ENCODE measurements at regions of chr1 and their contacts with region 1.

Region 1: DNA sequence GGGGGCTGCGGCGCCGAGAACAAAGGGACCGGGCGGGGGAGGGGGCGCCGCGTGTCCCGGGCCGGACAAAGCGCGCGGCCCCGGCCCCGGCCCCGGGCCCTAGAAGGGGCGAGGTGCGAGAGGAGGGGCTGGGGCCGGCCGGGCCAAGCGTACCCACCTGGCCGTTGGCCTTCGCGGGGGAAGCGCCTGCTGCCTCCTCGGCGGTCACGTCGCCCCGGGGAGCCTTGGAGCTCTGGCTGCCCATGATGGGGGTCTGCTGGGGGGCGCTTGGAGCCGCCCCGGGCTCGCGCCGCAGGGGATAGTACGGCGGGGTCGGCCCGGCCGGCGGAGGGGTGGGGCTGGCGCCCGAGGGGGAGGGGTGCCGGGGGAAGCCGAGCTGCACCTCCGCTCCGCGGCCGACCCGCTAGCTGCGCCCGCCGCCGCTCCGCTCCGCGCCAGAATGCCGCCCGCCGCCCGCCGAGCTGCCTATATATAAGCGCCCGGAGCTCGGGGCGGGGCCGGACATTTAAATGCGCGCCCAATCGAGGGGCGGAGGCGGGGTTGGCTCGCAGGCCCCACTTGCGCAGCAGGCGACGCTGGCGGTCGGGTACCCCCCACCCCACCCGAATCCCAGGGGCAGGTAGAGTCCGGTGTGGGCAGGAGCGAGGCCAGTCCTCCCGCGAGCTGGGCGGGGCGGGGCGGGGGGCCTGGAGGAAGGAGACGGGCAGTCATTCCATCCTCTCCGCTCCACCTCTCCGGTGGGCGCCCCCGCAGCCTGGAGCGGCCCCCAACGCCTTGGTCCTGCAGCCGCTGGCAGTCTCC is at the start of gene MARCKSL1:
- DNase-seq: peak; percentile 94
- ATAC-seq: peak; percentile 61
- H3K4me3 ChIP-seq: peak within 1 kb of the TSS; percentile 5 to 78 (median 70)
- H3K4me3 Mint-ChIP-seq: peak within 1 kb of the TSS; percentile 93
- H3K27ac ChIP-seq: peak within 1 kb of the TSS; percentile 49 to 61
- H3K27ac Mint-ChIP-seq: peak within 1 kb of the TSS; percentile 92
- H3K4me1 ChIP-seq: peaks cover 57 to 61% of the 10 kb centered on the region in 2 donors
- H3K4me1 Mint-ChIP-seq: peaks cover 60% of the 10 kb centered on the region
- H3K27me3 ChIP-seq: no peaks in the 10 kb centered on the region
- H3K27me3 Mint-ChIP-seq: no peaks in the 10 kb centered on the region
- CTCF ChIP-seq: no peak
- total RNA-seq, gene MARCKSL1: 73.2 and 77.6 TPM in 2 replicates

Region 2: DNA sequence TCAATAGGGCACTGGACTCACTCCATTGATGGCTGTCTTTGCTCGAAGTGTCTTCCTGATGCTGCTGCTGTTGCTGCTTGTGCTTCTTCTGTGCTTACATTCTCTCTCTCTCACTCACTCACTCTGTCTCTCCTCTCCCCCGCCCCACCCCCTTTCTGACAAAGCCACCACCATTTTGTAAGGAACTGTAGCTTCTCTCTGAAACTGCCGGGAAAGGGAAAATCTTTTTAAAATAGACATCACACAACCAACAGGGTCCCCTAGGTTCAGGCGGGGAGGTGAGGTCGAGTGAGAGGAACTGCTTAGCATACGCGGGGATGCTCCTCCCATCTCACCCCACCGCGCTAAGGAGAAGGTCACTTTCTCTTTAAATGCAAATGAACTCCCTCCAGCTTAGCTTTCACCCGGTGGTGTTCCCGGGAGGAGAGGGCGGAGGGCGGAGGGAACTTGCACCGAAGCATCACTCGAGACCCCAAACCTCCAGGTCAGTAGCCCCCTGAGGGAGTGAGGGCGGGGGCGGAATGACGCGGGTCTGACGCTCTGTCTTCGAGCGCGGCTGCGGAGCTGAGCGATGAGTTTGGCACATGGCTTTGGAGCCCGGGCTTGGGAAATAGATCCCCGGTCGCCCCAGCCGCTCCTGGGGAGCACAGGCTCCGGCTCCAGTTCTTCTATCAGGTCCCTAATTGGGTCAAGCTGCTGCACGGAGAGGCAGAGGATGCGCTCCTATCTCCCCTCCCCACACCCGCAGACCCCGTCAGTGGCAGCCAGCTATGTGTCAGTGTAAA is 135.6 kb before region 1 on chr1 and contains the start of gene CCDC28B:
- CTCF ChIA-PET with region 1: interaction called, 5 read pairs
- POLR2A ChIA-PET with region 1: interaction called, 6 read pairs
- intact Hi-C with region 1: loop called (anchors 2 kb)
- DNase-seq: peak; percentile 77
- ATAC-seq: peak; percentile 58
- H3K4me3 ChIP-seq: peak within 1 kb of the TSS; percentile 48 to 85 (median 79)
- H3K4me3 Mint-ChIP-seq: peak within 1 kb of the TSS; percentile 88
- H3K27ac ChIP-seq: peak within 1 kb of the TSS; percentile 78 to 88
- H3K27ac Mint-ChIP-seq: peak within 1 kb of the TSS; percentile 86
- H3K4me1 ChIP-seq: peaks cover 17 to 36% of the 10 kb centered on the region in 2 donors
- H3K4me1 Mint-ChIP-seq: peaks cover 33% of the 10 kb centered on the region
- H3K27me3 ChIP-seq: no peaks in the 10 kb centered on the region
- H3K27me3 Mint-ChIP-seq: no peaks in the 10 kb centered on the region
- CTCF ChIP-seq: no peak
- total RNA-seq, gene CCDC28B: 7.8 and 10.2 TPM in 2 replicates

Region 3: GRCh38 chr1:32240140-32240951 is 95.6 kb before region 1 on chr1:
- CTCF ChIA-PET with region 1: interaction called, 71 read pairs
- POLR2A ChIA-PET with region 1: interaction called, 53 read pairs
- intact Hi-C with region 1: loop called (anchors 2 kb)
- DNase-seq: peak; percentile 75
- ATAC-seq: peak; percentile 79
- H3K4me3 ChIP-seq: peak overlapping the region; percentile 50 to 77 (median 69)
- H3K4me3 Mint-ChIP-seq: peak overlapping the region; percentile 95
- H3K27ac ChIP-seq: peak overlapping the region; percentile 4 to 61
- H3K27ac Mint-ChIP-seq: peak overlapping the region; percentile 93
- H3K4me1 ChIP-seq: peaks cover 16 to 31% of the 10 kb centered on the region in 2 donors
- H3K4me1 Mint-ChIP-seq: peaks cover 20% of the 10 kb centered on the region
- H3K27me3 ChIP-seq: no peaks in the 10 kb centered on the region
- H3K27me3 Mint-ChIP-seq: no peaks in the 10 kb centered on the region
- CTCF ChIP-seq: peak; percentile 30

Region 4: GRCh38 chr1:32321712-32322291 is 14.2 kb before region 1 on chr1:
- CTCF ChIA-PET with region 1: interaction called, 16 read pairs
- POLR2A ChIA-PET with region 1: interaction called, 35 read pairs
- intact Hi-C with region 1: loop called (anchors 2 kb)
- DNase-seq: no peak
- ATAC-seq: peak; percentile 35
- H3K4me3 ChIP-seq: peak overlapping the region in 3 of 5 experiments; percentile 5 to 34 (median 12)
- H3K4me3 Mint-ChIP-seq: peak overlapping the region; percentile 80
- H3K27ac ChIP-seq: peak overlapping the region; percentile 59 to 63
- H3K27ac Mint-ChIP-seq: peak overlapping the region; percentile 89
- H3K4me1 ChIP-seq: peaks cover 70 to 78% of the 10 kb centered on the region in 2 donors
- H3K4me1 Mint-ChIP-seq: peaks cover 57% of the 10 kb centered on the region
- H3K27me3 ChIP-seq: no peaks in the 10 kb centered on the region
- H3K27me3 Mint-ChIP-seq: no peaks in the 10 kb centered on the region
- CTCF ChIP-seq: no peak

Region 5: DNA sequence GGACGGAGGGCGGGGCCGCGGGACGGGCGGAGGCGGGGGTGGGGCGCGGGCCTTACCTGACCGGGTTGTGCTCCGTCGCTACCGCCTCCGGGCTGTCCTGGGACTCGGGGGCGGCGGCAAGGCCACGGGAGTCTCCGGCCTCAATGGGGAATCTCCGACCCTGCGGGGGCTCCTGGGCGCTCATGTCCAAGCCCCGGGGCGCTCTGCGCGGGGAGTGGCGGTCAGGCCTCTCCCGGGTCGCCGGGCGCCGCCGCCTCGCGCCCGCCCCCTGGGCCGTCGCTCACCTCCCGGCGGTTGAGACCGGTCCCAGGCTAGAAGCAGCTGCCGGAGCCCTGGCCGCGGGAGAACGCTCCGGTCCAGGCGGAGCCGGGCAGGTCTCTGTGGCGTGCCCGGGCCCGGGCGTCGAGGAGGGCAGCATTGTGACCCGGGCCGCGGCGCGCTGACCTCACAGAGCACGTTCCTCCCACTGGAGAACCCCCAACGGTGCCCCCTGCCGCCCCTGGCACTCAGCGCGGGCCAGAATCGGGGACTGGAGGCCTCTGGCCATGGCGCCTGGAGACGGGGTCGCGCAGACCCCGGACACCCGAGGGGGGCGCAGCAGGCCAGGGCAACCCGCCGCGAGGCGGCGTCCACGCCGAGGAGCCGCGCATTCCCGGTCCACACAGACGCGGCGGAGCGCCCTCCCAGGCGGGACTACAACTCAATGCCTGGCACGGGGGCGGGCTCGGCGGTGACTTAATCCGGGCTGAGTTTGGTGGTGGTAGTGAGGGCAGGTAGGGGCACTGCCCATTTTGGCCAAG is 25.9 kb after region 1 on chr1:
- CTCF ChIA-PET with region 1: interaction called, 18 read pairs
- POLR2A ChIA-PET with region 1: interaction called, 23 read pairs
- intact Hi-C with region 1: no loop called
- DNase-seq: peak; percentile 65
- ATAC-seq: peak; percentile 46
- H3K4me3 ChIP-seq: peak overlapping the region in 3 of 5 experiments; percentile 51 to 54 (median 54)
- H3K4me3 Mint-ChIP-seq: peak overlapping the region; percentile 78
- H3K27ac ChIP-seq: no peak overlapping the region
- H3K27ac Mint-ChIP-seq: no peak overlapping the region
- H3K4me1 ChIP-seq: peaks cover 22 to 35% of the 10 kb centered on the region in 2 donors
- H3K4me1 Mint-ChIP-seq: peaks cover 29% of the 10 kb centered on the region
- H3K27me3 ChIP-seq: no peaks in the 10 kb centered on the region
- H3K27me3 Mint-ChIP-seq: no peaks in the 10 kb centered on the region
- CTCF ChIP-seq: no peak

Region 6: DNA sequence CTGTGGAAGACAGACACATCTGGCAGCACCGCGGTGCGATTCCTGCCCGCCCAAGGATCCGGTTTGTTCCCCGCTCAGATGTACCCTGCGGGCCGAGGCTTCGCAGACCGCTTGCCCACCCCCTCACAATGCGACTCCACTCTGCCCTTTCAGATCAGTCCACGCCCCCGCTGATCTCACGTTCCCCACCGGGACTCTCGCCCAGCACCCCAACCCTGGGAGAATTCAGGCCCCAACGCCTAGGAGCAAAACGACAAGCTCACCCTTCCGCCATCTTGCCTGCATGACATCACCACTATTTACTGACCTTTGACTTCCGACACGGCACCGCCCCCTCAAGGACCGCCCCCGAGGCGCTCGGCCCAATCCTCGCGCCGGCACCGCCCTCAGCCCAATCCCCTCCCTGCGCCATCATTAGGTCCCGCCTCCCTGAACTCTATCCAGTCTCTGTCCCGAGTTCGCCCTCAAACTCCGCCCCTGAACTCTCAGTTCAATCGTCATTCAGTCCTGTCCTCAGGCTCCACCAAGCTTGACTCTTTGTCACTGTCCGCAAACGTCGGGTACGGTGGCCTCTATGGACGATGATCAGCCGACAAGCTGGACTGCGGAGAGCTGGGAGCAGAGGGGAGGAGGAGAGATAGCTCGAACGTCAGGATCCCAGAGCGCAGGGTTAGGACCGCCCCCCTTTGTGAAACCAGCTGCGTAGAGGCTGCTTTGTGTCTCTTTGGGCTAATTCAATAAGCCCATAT is 58.3 kb after region 1 on chr1 and contains the start of gene BSDC1:
- CTCF ChIA-PET with region 1: interaction called, 8 read pairs
- POLR2A ChIA-PET with region 1: interaction called, 12 read pairs
- intact Hi-C with region 1: loop called (anchors 1 kb)
- DNase-seq: peak; percentile 99
- ATAC-seq: peak; percentile 99
- H3K4me3 ChIP-seq: peak within 1 kb of the TSS; percentile 66 to 94 (median 84)
- H3K4me3 Mint-ChIP-seq: peak within 1 kb of the TSS; percentile 99
- H3K27ac ChIP-seq: peak within 1 kb of the TSS; percentile 91
- H3K27ac Mint-ChIP-seq: peak within 1 kb of the TSS; percentile 99
- H3K4me1 ChIP-seq: peaks cover 14 to 27% of the 10 kb centered on the region in 2 donors
- H3K4me1 Mint-ChIP-seq: peaks cover 31% of the 10 kb centered on the region
- H3K27me3 ChIP-seq: no peaks in the 10 kb centered on the region
- H3K27me3 Mint-ChIP-seq: peaks cover 3% of the 10 kb centered on the region
- CTCF ChIP-seq: no peak
- total RNA-seq, gene BSDC1: 117 and 124 TPM in 2 replicates

Region 7: DNA sequence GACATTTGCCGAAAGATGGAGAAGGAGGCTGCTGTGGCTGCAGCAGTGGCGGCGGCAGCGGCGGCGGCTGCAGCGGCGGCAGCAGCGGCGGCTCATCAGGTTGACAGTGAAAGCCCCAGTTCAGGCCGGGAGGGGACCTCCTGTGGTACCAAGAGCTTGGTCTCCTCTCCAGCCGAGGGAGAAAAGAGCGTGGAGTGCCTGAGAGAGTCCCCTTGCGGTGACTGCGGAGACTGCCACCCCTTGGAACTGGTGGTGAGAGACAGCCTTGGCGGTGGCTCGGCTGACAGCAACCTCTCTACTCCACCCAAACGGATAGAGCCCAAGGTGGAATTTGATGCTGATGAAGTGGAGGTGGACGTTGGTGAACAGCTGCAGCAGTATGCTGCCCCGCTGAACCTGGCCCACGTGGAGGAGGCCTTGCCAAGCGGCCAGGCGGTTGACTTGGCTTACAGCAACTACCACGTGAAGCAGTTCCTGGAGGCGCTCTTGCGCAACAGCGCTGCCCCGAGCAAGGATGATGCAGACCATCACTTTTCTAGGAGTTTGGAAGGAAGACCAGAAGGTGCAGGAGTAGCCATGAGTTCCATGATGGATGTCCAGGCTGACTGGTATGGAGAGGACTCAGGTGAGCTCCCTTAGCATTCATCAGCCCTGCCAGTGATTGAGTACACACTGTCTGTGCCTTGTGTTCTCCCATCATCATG is 135.2 kb after region 1 on chr1:
- CTCF ChIA-PET with region 1: no interaction called
- POLR2A ChIA-PET with region 1: no interaction called
- intact Hi-C with region 1: no loop called
- DNase-seq: peak; percentile 32
- ATAC-seq: no peak
- H3K4me3 ChIP-seq: no peak overlapping the region
- H3K4me3 Mint-ChIP-seq: no peak overlapping the region
- H3K27ac ChIP-seq: no peak overlapping the region
- H3K27ac Mint-ChIP-seq: no peak overlapping the region
- H3K4me1 ChIP-seq: no peaks in the 10 kb centered on the region
- H3K4me1 Mint-ChIP-seq: peaks cover 1% of the 10 kb centered on the region
- H3K27me3 ChIP-seq: peaks cover 0 to 41% (median 13%) of the 10 kb centered on the region in 4 experiments
- H3K27me3 Mint-ChIP-seq: peaks cover 27% of the 10 kb centered on the region
- CTCF ChIP-seq: peak; percentile 18

Measured in B cell (primary cell).